OCI-LY7 (cell line): ENCODE measurements at regions of chr9 and their contacts with region 1.

Region 1: DNA sequence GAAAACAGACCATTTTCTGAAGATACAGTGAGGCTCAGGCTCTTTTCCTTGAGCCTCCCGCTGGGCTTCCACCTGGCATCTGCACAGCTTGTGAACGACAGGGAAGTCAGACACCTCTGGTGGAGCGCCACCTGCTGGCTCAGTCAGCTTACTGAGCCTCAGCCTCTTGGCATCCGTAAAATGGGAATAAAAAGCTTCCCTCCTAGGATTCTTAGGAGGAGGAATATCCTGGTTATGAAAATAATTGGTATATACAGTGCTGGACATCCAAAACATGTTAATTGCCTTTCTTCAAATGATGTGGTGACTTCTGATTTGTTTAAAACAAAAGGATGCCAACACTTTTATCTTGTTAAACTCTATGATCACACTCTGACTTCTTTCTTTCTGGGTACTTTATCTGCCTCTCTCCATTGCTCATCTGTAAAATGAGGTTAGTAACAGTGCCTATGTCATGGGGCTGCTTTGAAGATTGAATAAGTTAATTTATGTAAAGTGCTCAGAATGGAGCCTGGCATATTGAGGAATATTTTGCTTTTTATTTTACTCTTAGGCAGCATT is 67.5 kb downstream of the MAMDC2 start:
- DNase-seq: peak; percentile 65
- H3K4me3 ChIP-seq: no peak overlapping the region
- H3K27ac ChIP-seq: no peak overlapping the region
- H3K4me1 ChIP-seq: no peaks in the 10 kb centered on the region
- CTCF ChIP-seq: peak; percentile 94

Region 2: GRCh38 chr9:69971643-69972449 is 139.3 kb before region 1 on chr9:
- CTCF ChIA-PET with region 1: interaction called, 3 read pairs
- POLR2A ChIA-PET with region 1: no interaction called
- intact Hi-C with region 1: loop called (anchors 1 kb)
- DNase-seq: peak; percentile 51
- H3K4me3 ChIP-seq: no peak overlapping the region
- H3K27ac ChIP-seq: no peak overlapping the region
- H3K4me1 ChIP-seq: no peaks in the 10 kb centered on the region
- CTCF ChIP-seq: peak; percentile 87